PC-3 (cell line): ENCODE measurements at regions of chr12 and their contacts with region 1.

Region 1: GRCh38 chr12:49644620-49644994 is 21.2 kb downstream of the PRPF40B start:
- DNase-seq: peak; percentile 79
- ATAC-seq: peak; percentile 87
- H3K4me3 ChIP-seq: no peak overlapping the region
- H3K27ac ChIP-seq: no peak overlapping the region
- H3K4me1 ChIP-seq: peaks cover 4% of the 10 kb centered on the region; the same call in 1 of the 2 replicates
- H3K27me3 ChIP-seq: no peaks in the 10 kb centered on the region
- CTCF ChIP-seq: peak; percentile 96

Region 2: GRCh38 chr12:49623142-49623904 is 21.3 kb before region 1 on chr12 and contains the start of gene PRPF40B:
- CTCF ChIA-PET with region 1: no interaction called
- POLR2A ChIA-PET with region 1: interaction called, 12 read pairs
- intact Hi-C with region 1: no loop called
- DNase-seq: peak; percentile 84
- ATAC-seq: peak; percentile 85
- H3K4me3 ChIP-seq: peak within 1 kb of the TSS; percentile 75
- H3K27ac ChIP-seq: peak within 1 kb of the TSS; percentile 45
- H3K4me1 ChIP-seq: peaks cover 58% of the 10 kb centered on the region
- H3K27me3 ChIP-seq: no peaks in the 10 kb centered on the region
- CTCF ChIP-seq: peak; percentile 33; the same call in 1 of the 2 replicates
- total RNA-seq, gene PRPF40B: 16.2 and 17.7 TPM in 2 replicates

Region 3: DNA sequence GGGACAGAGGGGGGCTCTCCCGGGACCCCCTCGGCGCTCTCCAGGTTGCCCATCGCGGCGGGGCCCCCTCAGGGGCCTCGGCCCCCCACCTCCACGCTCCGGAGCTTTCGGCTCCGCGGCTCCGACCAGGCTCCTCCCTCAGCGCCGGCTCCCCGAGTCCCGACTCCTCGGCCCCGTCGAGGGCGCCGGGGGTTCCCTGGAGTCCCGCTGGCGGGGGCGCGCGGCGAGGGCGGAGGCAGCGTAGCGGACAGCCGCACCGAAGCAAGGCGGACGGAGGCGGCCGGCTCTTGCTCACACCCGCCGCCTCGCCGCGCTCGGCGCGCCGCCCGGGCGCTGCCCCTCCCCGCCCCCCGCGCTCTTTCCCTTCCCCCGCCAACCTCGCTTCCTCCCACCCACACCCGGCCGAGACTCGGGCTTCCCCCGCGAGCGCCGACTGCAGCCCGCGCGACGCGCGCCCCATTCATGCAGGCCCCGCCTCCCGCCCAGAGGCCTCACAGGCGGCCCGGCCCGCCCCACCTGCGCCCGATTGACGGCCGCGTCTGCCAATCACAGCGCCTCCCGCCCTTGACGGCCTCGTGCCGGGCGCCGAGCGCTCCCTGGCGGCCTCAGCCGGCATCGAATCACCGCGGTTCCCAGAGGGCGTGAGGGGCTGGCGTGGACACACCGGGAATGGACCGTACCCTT is 62.7 kb after region 1 on chr12 and contains the start of gene FMNL3:
- CTCF ChIA-PET with region 1: interaction called, 6 read pairs
- POLR2A ChIA-PET with region 1: no interaction called
- intact Hi-C with region 1: loop called (anchors 1 kb)
- DNase-seq: peak; percentile 95
- ATAC-seq: peak; percentile 95
- H3K4me3 ChIP-seq: peak within 1 kb of the TSS; percentile 74
- H3K27ac ChIP-seq: no peak within 1 kb of the TSS
- H3K4me1 ChIP-seq: peaks cover 9% of the 10 kb centered on the region; the same call in 1 of the 2 replicates
- H3K27me3 ChIP-seq: peaks cover 22% of the 10 kb centered on the region
- CTCF ChIP-seq: peak; percentile 91
- total RNA-seq, gene FMNL3: 5.2 and 6.2 TPM in 2 replicates